AG04450 (cell line): ENCODE measurements at regions of chr17 and their contacts with region 1.

Region 1: DNA sequence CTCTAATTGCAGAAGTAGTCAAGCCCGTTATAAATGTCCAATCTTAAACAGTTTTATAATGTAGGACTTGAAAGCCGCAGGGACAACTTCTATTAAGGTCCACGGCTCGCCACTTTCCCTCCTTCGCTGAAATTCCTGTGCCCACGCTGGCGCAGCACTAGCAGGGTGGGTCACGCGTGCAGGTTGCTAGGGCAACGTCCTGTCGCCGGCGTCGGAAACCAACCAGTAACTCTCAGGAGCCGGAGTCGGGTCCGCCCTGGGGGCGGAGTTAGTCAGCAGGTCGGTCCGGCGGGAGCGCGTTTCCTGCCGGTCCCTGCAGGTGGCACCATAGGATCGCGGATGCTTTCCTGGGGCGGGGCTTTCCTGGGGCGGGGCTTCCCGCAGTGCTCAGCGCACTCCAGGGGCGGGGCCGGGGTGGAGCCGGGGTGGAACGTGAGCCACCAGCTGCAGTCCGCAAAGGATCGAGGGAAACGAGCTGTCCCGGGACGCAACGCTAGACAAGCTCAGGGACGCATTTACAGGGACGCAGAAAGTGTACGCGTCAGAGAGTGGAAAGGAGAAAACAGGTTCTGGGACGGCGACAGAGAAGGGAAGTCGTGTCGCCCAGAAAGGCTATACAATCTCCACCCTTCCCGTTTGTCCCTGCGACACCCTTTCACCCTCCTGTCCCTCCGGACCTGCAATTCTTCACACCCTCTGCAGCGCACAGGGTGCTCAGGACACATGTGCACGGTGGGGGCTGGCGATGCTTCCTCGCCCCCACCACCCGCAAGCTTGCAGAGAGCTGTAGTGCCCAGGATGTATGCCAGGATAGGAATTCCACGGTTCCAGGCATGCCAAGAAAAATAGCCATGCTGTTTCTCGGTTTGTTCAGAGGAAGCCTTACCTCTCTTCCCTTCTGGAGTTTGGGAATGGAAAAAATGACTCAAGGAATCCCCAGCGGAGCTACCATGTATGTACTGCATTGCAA is 12.4 kb downstream of the COPZ2 start:
- DNase-seq: peak; percentile 93
- H3K4me3 ChIP-seq: peak overlapping the region; percentile 70
- H3K27ac ChIP-seq: peak overlapping the region; percentile 52
- H3K27me3 ChIP-seq: peaks cover 3% of the 10 kb centered on the region
- CTCF ChIP-seq: peak; percentile 70

Region 2: DNA sequence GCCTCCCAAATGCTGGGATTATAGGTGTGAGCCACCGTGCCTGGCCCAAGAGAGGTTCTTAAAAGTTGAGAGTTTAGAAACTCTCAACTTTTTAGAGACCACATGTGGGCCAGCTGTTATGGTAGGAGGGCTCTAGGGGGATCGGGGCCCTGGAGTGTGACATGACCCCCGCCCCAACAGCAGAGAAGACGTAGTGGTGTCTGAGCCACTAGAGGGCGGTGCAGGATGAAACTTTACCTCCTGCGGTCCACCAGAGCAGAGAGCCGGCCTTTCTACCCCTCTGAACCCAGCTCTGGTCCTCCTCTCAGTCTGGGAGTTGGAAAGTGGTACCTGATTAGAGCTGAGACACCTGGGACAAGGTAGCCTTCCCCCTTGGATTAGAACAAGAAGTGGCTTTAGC is 46.9 kb before region 1 on chr17:
- CTCF ChIA-PET with region 1: interaction called, 33 read pairs
- POLR2A ChIA-PET with region 1: interaction called, 3 read pairs
- DNase-seq: peak; percentile 32
- H3K4me3 ChIP-seq: no peak overlapping the region
- H3K27ac ChIP-seq: no peak overlapping the region
- H3K27me3 ChIP-seq: no peaks in the 10 kb centered on the region
- CTCF ChIP-seq: peak; percentile 77

Region 3: DNA sequence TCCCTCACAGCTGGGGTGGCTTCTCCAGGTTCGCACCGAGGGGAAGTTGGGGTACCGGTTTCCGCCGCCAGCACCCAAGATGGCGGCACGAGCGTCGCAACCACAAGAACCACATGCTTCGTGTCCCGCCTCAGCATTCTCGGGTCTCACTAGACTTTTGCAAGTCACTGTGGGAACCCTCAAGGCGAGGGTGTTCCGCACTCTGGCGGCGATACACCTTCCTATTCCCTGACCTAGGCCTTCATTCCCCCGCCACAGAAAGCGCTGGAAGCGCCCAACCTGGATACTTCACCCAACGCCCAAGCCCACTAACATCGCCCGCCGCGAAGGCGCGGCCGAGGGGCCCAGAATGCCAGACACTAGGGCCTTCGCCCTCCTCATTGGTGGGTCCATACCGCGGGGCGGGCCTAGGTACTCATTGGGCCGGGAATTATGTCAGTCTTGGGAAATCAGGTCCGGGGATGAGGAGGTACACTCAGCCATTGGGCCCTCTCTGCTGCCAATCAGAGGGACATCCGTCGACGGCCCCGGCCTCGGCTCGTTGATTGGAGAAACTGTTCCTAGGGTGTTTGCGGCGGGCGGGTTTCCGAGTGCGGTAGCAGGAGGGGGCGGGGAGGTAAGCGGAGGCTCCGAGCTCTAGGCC is 22.6 kb after region 1 on chr17 and contains the start of gene NFE2L1:
- CTCF ChIA-PET with region 1: interaction called, 33 read pairs
- POLR2A ChIA-PET with region 1: interaction called, 22 read pairs
- DNase-seq: peak; percentile 99
- H3K4me3 ChIP-seq: peak within 1 kb of the TSS; percentile 94
- H3K27ac ChIP-seq: peak within 1 kb of the TSS; percentile 98
- H3K27me3 ChIP-seq: no peaks in the 10 kb centered on the region
- CTCF ChIP-seq: no peak
- polyA plus RNA-seq, gene NFE2L1: 237 and 251 TPM in 2 replicates

Region 4: GRCh38 chr17:48068491-48068961 is 43.3 kb after region 1 on chr17:
- CTCF ChIA-PET with region 1: interaction called, 82 read pairs
- POLR2A ChIA-PET with region 1: interaction called, 4 read pairs
- DNase-seq: no peak
- H3K4me3 ChIP-seq: no peak overlapping the region
- H3K27ac ChIP-seq: no peak overlapping the region
- H3K27me3 ChIP-seq: no peaks in the 10 kb centered on the region
- CTCF ChIP-seq: peak; percentile 53

Region 5: DNA sequence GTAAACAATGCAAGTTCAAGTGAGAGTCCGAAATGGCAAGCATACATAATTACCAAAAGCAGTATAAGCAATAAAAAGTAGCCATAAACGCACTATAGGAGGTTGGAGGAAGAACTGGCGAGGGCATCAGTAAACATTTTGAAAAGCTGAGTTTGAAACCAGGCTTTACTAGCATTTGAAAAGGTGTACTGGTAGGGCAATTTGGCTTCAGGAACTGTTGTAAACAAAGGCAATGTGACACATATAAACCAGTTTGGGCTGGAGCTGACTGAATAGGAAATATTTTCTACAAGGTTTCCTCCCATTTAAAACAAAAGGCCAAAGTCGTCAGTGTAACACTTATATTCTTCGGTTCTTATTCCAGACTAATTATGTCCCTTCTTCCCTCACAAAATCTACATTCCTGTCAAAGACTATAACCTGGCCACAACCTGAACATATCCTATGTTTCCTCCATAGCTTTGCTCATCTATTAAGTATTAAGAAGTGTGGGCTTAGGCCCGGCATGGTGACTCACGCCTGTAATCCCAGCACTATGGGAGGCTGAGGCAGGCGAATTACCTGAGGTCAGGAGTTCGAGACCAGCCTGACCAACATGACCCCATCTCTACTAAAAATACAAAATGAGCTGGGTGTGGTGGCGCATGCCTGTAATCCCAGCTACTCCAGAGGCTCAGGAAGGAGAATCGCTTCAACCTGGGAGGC is 68.3 kb after region 1 on chr17:
- CTCF ChIA-PET with region 1: interaction called, 23 read pairs
- POLR2A ChIA-PET with region 1: no interaction called
- DNase-seq: no peak
- H3K4me3 ChIP-seq: no peak overlapping the region
- H3K27ac ChIP-seq: no peak overlapping the region
- H3K27me3 ChIP-seq: no peaks in the 10 kb centered on the region
- CTCF ChIP-seq: no peak

Region 6: GRCh38 chr17:48107168-48108132 is 82.2 kb after region 1 on chr17 and contains the start of gene SNX11:
- CTCF ChIA-PET with region 1: interaction called, 15 read pairs
- POLR2A ChIA-PET with region 1: interaction called, 4 read pairs
- DNase-seq: peak; percentile 55
- H3K4me3 ChIP-seq: peak within 1 kb of the TSS; percentile 94
- H3K27ac ChIP-seq: peak within 1 kb of the TSS; percentile 70
- H3K27me3 ChIP-seq: no peaks in the 10 kb centered on the region
- CTCF ChIP-seq: no peak
- polyA plus RNA-seq, gene SNX11: 16.0 and 17.2 TPM in 2 replicates

Region 7: GRCh38 chr17:48283411-48283810 is 258.2 kb after region 1 on chr17:
- CTCF ChIA-PET with region 1: no interaction called
- POLR2A ChIA-PET with region 1: no interaction called
- DNase-seq: no peak
- H3K4me3 ChIP-seq: no peak overlapping the region
- H3K27ac ChIP-seq: no peak overlapping the region
- H3K27me3 ChIP-seq: peaks cover 31% of the 10 kb centered on the region
- CTCF ChIP-seq: no peak